GM10248 (cell line): ENCODE measurements at regions of chr1 and their contacts with region 1.

Region 1: DNA sequence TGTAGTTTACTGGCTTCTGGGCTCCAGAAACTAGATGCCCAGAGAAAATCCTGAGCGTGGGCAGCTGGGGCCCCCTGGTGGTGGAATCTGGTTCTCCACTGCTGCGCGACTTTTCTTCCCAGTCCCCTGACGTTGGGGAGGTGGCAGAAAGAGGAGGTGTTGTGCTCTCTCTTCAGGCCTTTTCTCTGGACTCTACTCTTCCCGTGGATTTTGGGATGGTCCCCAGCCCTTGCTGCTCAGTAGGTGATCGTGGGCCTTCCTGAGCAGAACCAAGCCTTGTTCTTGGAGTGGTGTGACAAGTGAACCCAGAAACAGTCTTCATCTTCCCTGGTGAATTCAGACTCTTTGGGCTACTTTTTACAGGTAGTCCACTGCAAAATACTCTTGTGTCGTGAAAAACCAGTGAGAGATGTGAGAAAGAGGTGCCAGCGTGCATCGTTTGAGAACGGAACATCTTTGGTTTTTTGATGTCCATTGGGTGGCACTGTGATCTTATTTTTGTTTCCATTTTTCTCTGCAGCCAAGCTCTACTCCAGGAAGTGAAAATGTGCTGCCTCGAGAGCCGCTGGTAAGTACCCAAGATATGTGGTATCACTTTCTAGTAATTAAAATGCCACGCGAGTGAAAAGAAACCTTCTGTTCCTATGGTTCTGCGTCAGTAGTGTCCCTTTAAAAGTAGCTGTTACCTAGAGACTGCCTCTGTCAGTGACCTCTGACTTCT is 20.2 kb downstream of the PEX14 start:
- DNase-seq: peak; percentile 83
- CTCF ChIP-seq: peak; percentile 90

Region 2: DNA sequence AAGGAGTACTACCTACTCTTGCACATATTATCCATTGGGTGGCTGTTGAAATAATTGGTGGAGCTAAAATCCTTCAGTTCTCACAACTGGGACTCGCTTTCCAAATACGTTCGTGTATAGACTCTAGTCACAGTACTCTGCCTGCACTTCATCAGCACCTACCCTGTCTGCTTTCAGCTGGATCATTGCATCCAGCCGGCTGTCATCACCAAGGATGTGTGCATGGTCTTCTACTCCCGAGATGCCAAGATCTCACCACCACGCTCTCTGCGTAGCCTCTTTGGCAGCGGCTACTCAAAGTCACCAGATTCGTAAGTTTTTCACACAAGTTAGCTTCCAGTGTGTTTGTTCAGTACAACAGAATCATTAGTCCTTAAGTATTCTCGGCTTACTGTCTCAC is 133.4 kb before region 1 on chr1:
- CTCF ChIA-PET with region 1: no interaction called
- POLR2A ChIA-PET with region 1: no interaction called
- DNase-seq: no peak
- CTCF ChIP-seq: no peak

Region 3: GRCh38 chr1:10378081-10378841 is 116.7 kb before region 1 on chr1:
- CTCF ChIA-PET with region 1: interaction called, 10 read pairs
- POLR2A ChIA-PET with region 1: no interaction called
- DNase-seq: no peak
- CTCF ChIP-seq: no peak

Region 4: GRCh38 chr1:10438677-10439163 is 56.2 kb before region 1 on chr1:
- CTCF ChIA-PET with region 1: interaction called, 147 read pairs
- POLR2A ChIA-PET with region 1: no interaction called
- DNase-seq: no peak
- CTCF ChIP-seq: no peak

Region 5: GRCh38 chr1:10484521-10484920 is 10.4 kb before region 1 on chr1:
- CTCF ChIA-PET with region 1: interaction called, 54 read pairs
- POLR2A ChIA-PET with region 1: interaction called, 3 read pairs
- DNase-seq: no peak
- CTCF ChIP-seq: no peak

Region 6: DNA sequence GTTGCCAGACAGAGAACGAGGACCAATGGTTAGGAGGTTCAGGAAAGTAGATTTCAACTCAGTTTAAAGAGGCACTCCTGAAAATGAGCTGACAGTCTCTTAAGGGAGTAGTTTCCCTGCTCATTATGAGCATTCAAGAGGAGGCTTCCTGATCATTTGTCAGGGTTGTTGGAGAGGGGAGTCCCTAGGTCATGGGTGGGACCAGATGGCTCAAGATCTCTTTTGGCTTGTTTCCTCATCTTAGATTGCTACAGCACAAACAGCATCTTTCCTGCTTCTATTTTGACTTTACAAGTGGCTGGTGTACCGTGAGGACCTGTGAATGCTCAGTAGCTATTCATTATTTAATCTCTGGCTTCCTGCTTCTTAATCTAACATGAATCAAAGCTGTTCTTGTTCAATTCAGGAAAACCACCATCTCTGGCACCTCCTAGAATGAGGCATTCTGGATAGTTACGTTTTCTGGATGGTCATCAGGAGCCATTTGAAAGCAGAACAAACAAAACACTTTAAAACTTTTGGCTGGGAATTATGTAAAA is 27.5 kb after region 1 on chr1:
- CTCF ChIA-PET with region 1: interaction called, 11 read pairs
- POLR2A ChIA-PET with region 1: no interaction called
- DNase-seq: no peak
- CTCF ChIP-seq: no peak

Region 7: GRCh38 chr1:10803971-10804820 is 309.3 kb after region 1 on chr1:
- CTCF ChIA-PET with region 1: no interaction called
- POLR2A ChIA-PET with region 1: no interaction called
- DNase-seq: no peak
- CTCF ChIP-seq: no peak

Region 8: DNA sequence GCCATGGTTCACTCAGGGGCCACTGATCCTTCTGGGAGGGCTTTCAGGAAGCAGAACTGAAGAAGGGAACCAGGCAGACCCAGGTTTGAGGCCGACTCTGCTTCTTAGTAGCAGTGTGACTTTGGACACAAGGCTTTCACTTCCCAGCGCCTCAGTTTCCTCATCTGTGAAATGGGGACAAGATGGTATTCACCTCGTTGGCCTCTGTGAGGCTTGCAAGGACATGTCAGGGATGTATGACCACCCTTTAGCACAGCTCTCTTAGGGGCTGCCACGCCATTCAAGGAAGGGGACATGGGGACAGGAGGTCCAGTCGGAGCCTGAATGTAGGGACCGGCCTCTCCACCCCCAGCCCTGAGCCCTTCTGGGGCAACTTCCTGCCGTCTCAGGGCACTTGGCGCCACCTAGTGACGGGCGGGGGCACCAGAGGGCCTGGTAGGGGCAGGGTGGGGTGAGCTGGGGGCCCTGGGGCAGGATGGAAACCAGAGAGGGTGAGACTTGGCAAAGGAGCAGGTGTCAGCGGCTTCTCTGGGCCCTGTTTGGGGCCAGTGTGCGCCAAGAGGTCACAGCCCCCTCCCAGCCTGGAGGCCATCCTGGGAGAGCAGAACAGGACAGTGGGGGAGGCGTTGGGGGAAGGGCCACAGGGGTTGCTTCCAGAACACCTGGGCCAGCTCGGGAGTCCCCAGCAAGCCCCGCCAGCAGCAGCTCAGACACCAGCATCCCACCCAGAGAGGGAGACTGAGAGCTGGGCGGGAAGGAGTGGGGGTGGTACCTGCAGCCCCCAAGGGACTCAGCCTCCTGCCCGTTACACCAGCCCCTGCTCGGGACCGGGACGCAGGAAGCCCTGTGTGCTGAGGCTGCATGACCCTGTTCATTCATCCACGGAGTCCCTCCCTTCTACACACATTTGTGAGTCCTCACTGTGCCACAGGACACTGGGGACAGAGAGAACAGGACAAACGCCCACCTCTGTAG is 415.1 kb after region 1 on chr1:
- CTCF ChIA-PET with region 1: interaction called, 14 read pairs
- POLR2A ChIA-PET with region 1: no interaction called
- DNase-seq: peak; percentile 81
- CTCF ChIP-seq: peak; percentile 42